Activated CD4-positive, alpha-beta T cell treated with anti-CD3 and anti-CD28 coated beads for 36 hours (primary cell): ENCODE measurements at regions of chr11 and their contacts with region 1.

Region 1: GRCh38 chr11:129695575-129696308 is 119.9 kb upstream of the TMEM45B start:
- DNase-seq: peak; percentile 83
- ATAC-seq: peak; percentile 86
- H3K4me3 Mint-ChIP-seq: peak overlapping the region; percentile 53
- H3K27ac Mint-ChIP-seq: peak overlapping the region; percentile 63
- H3K4me1 Mint-ChIP-seq: peaks cover 5% of the 10 kb centered on the region
- H3K27me3 Mint-ChIP-seq: peaks cover 8% of the 10 kb centered on the region

Region 2: DNA sequence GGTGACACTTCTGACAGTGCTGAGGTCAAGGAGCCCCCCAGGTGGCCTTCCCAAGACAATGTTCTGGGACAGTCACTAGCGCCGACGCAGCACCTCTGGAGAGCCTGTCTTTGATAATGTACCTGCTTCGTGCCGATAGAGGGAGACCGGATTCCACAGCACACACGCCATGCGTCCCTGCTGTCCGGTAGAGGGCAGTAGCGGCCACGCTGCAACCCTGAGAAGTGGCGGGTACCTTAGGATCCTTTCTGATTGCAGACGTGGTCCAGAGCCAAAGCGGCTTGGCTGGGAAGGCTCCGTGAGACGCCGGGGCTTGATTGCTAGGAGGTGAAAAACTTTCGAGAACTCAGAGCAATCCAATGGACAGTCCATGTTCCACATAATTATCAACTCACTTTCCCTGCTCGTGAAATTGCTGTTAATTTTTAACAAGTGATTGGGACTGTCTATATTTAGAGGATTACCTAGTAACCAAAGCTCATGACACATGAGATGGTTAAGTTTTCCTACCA is 331.5 kb before region 1 on chr11:
- CTCF ChIA-PET with region 1: interaction called, 14 read pairs
- POLR2A ChIA-PET with region 1: no interaction called
- intact Hi-C with region 1: loop called (anchors 1 kb)
- DNase-seq: peak; percentile 91
- ATAC-seq: peak; percentile 99
- H3K4me3 Mint-ChIP-seq: no peak overlapping the region
- H3K27ac Mint-ChIP-seq: no peak overlapping the region
- H3K4me1 Mint-ChIP-seq: no peaks in the 10 kb centered on the region
- H3K27me3 Mint-ChIP-seq: peaks cover 32% of the 10 kb centered on the region

Region 3: DNA sequence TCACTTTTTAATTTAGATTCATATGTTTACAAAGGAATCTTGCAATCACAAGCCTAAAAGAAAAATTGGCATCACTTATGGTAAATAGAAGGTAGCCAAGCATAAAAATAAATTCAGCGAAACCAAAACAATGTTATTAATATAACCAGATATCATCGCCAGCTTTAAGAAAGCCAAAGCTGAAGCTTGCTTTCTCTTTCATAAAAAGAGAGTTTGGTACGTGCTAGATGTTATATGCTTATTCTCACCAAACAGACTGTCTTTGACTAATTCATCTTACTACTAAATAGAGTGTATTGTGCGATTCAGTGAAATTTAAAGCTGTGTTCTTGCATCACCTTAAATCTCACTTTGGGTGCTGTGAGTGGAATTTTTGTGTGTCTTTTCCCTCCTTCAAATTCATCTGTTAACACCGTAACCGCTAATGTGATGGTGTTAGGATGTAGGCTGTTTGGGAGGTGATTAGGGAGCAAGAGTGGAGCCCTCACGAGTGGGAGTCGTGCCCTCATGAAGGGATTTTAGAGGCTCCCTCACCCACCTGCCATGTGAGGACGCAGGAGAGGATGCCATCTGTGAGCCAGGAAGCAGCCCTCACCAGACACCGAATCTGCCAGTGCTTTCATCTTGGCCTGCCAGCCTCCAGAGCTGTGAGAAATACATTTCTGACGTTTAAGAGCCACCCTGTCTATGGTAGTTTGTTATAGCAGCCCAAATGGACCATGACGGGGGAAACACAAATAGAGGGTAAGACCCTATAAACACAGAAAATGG is 14.2 kb before region 1 on chr11:
- CTCF ChIA-PET with region 1: interaction called, 12 read pairs
- POLR2A ChIA-PET with region 1: no interaction called
- intact Hi-C with region 1: no loop called
- DNase-seq: no peak
- ATAC-seq: no peak
- H3K4me3 Mint-ChIP-seq: no peak overlapping the region
- H3K27ac Mint-ChIP-seq: no peak overlapping the region
- H3K4me1 Mint-ChIP-seq: no peaks in the 10 kb centered on the region
- H3K27me3 Mint-ChIP-seq: peaks cover 5% of the 10 kb centered on the region

Region 4: DNA sequence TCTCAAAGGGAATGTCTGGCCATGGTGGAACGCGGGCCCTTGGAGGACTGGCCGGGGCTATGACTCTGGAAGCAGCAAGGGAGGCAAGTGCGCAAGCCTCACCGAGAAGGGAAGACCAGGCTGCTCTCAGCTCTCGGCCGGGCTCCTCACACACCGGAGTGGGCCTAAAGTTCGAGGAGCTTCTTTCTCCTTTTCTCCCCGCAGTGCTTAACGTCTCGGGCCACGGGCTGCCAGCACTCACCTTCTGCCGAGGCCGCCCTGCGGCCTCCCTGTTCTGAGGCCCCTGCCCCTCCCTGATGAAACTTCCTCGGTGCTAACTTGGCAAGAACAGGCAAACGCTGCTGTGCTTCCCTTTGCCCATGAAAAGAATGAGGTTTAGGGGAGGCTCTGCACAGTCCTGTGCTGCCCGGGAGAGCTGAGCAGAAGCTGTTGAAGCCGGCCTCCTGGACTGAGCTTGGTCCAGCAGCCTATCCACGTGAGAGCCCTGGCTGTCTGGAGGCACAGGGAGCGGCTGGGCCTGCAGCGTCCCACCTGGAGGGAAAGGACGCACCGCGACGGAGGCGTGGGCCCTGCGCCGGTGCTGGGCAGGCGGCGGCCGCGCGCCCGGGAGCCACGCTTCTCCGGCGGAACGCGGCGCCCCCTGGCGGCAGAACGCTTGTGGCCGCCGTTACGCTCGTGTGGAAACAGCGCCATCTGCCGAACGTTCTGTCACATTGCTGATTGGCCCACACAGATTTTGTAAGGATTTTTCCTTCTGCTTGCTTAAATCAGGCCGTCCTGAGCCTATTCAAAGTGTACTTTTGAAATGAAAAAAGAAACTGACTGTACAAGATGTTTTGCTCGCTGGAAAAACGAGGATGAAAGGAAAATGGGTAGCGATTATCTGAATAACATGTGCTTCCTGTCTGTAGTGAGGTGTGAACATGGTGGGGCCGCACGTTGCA is 54.9 kb after region 1 on chr11:
- CTCF ChIA-PET with region 1: interaction called, 5 read pairs
- POLR2A ChIA-PET with region 1: no interaction called
- intact Hi-C with region 1: loop called in 1 of 2 experiments (anchors 2 kb)
- DNase-seq: peak; percentile 88
- ATAC-seq: peak; percentile 93
- H3K4me3 Mint-ChIP-seq: no peak overlapping the region
- H3K27ac Mint-ChIP-seq: no peak overlapping the region
- H3K4me1 Mint-ChIP-seq: peaks cover 3% of the 10 kb centered on the region
- H3K27me3 Mint-ChIP-seq: peaks cover 12% of the 10 kb centered on the region